Left cardiac atrium (tissue), 4 donors: ENCODE measurements at regions of chr11 and their contacts with region 1.

Region 1: DNA sequence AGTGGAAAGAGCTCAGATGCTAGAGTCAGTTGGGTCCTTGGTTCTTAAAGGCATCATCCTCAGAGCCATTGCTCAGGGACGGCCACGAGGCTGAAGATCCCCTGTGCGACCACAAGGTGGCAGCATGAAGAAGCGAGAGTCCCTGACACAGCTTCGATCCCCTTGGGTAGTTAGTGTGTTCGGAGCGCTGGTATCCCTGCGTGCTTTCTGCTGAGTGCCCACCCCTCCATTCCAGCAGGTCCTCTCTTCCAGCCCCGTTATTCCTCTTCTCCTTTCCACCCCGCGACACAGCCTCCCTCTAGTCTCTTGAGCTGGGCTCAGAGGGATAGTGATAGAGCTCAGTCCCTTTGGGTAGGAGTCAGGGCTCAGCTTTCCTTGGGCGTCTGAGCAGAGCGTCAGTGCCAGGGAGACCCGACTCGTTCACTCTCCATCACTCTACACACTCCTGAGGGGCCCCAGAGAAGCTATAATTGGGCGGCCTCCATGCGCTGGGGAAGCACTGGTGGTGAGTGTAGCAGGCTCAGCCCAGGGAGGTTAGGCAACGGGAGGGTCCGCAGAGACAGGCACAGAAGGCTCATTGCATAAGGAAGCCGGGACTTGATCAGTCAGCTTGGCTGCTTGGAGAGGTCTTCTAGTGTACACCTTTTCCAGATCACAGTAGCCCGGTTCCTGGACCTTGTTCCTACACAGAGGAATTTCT is at the start of gene OR51D1:
- DNase-seq: peak; percentile 66
- ATAC-seq: peak; percentile 95 to 96
- total RNA-seq, gene OR51D1: not detected

Region 2: DNA sequence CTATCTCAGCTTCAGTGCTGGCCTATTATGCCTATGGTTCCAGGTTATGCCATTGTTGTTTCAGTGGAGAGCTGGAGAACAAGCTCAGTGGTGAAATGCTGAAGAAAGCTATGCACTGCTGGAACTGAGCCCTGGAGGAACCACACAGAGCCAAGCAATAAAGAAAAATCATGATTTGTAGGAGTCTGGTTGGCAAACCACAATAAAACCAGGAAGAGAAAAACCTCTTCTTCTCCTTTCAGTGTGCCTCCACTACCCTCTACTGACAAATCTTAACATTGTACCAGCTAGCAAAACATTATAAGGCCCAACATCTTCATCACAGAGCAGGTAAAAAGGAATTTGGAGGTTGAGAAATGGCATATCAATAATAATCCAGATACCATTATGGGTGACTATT is 189.3 kb after region 1 on chr11:
- intact Hi-C with region 1: loop called (anchors 2 to 5 kb)
- DNase-seq: no peak
- ATAC-seq: peak; percentile 38 to 70